ENCODE measurements at regions of chr7 and their contacts with region 1.

Region 1: DNA sequence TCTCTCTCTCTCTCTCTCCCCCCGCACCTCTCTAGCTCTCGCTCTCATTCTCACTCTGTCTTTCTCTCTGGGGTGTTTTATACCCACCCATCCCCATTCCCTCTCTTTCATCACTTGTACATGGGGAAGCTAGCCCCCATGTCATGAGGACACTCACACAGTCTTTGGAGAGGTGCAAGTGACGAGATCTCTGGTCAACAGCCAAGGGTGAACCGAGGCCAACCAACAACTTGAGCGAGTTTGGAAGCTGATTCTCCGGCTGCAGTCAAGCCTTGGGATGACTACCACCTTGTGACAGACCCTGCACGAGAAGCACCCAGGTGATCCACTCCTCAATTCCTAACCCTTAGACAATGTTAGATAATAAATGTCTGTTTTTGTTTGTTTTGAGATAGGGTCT is 10.1 kb upstream of the KBTBD2 start:
- DNase-seq: no peak
- ATAC-seq: no peak
- H3K4me3 ChIP-seq: no peak overlapping the region
- H3K27ac ChIP-seq: no peak overlapping the region
- H3K4me1 ChIP-seq: peaks cover 7% of the 10 kb centered on the region
- H3K27me3 ChIP-seq: no peaks in the 10 kb centered on the region
- CTCF ChIP-seq: no peak
- POLR2A ChIP-seq: no peak

Region 2: DNA sequence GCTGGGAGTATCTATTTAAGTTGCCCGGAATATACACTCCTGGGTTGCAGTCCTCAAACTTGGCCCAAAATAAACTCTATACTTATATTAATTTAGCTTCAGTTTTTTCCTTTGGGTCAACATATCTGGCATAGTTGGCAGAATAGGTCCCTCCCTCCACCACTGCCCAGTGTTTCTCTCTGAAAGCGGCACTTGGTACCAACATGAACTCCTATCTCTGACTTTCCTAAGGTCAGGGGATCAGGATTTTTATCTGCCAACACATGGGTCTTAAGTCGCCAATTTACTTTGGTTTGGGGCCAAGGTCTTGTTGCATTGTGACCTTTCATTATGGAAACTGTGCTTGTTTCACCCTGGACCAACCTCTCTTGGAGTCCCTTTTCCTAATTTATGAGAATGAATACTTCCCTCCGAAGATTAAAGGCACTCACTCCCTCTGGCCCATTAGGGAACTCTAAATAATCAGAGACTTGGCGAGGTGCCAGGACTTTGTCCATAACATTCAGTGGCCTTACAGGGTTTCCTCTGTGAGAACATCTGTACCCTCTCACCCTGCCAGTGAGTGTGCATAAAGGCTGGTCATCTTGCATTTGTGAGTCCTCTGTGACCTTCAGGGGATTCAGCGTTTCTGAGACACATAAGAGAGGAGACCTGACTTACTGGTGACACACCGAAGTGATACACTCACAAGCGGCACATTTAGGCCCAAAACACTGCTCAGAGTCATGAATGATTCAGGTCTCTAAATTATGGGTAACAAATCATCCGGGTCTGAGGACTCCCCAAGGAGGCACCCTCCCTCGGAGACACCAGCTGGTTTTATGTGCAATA is 35.9 kb after region 1 on chr7:
- intact Hi-C with region 1: loop called (anchors 5 kb)
- DNase-seq: peak; percentile 45 to 57 (median 54)
- ATAC-seq: no peak
- H3K4me3 ChIP-seq: no peak overlapping the region
- H3K27ac ChIP-seq: no peak overlapping the region
- H3K4me1 ChIP-seq: peaks cover 28% of the 10 kb centered on the region
- H3K27me3 ChIP-seq: no peaks in the 10 kb centered on the region
- CTCF ChIP-seq: no peak
- POLR2A ChIP-seq: no peak

Measured in body of pancreas (tissue), 4 donors.